Activated CD4-positive, alpha-beta memory T cell treated with anti-CD3 and anti-CD28 coated beads for 36 hours (primary cell): ENCODE measurements at regions of chr1 and their contacts with region 1.

Region 1: GRCh38 chr1:18883636-18884418 is 18.5 kb downstream of the ALDH4A1 start:
- DNase-seq: peak; percentile 78
- H3K4me3 Mint-ChIP-seq: no peak overlapping the region
- H3K27ac Mint-ChIP-seq: no peak overlapping the region
- H3K4me1 Mint-ChIP-seq: no peaks in the 10 kb centered on the region
- H3K27me3 Mint-ChIP-seq: no peaks in the 10 kb centered on the region

Region 2: GRCh38 chr1:18972531-18972930 is 88.7 kb after region 1 on chr1:
- CTCF ChIA-PET with region 1: interaction called, 14 read pairs
- POLR2A ChIA-PET with region 1: no interaction called
- intact Hi-C with region 1: no loop called
- DNase-seq: no peak
- H3K4me3 Mint-ChIP-seq: no peak overlapping the region
- H3K27ac Mint-ChIP-seq: no peak overlapping the region
- H3K4me1 Mint-ChIP-seq: peaks cover 9% of the 10 kb centered on the region
- H3K27me3 Mint-ChIP-seq: peaks cover 12% of the 10 kb centered on the region

Region 3: DNA sequence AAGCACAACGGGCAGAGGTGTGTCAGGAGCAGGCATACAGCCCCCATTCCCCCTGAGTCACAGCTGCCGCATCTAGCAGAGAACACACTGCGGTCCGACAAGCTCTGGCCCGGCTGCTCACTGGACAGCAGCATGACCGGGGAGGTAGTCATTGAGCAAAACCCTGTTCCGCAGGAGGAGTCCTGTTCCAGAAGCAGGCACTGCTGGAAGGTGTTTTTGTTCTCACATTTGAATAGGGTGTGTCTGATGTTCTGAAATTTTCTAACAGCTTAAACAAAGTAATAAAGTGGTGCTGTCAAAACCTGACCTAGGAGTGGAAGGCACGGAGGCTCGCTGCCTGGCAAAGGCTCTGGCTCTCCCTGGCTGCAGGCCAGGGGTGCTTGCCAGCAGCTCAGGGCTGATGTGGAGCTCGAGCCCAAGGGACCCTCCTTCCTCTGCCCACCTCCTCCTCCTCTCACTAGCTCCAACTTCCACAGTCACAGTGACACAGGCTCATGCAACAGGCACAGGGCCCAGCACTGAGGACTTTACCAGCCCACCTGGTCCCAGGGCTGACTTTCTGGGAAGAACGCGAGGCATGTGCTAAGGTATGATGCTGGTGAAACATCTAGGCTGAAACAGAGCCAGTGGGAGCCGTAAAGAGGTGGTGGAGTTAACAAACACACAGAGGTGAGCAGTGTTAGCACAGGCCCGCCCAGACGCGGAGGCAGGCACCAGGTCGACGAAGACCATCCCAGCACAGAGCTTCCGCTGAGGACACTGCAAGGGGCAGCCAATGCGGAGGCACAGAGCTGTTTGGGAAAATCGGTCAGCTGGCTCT is 191.3 kb after region 1 on chr1:
- CTCF ChIA-PET with region 1: interaction called, 36 read pairs
- POLR2A ChIA-PET with region 1: no interaction called
- intact Hi-C with region 1: loop called (anchors 1 kb)
- DNase-seq: no peak
- H3K4me3 Mint-ChIP-seq: no peak overlapping the region
- H3K27ac Mint-ChIP-seq: peak overlapping the region; percentile 81
- H3K4me1 Mint-ChIP-seq: peaks cover 55% of the 10 kb centered on the region
- H3K27me3 Mint-ChIP-seq: no peaks in the 10 kb centered on the region

Region 4: GRCh38 chr1:19087737-19088594 is 204.1 kb after region 1 on chr1:
- CTCF ChIA-PET with region 1: interaction called, 10 read pairs
- POLR2A ChIA-PET with region 1: no interaction called
- intact Hi-C with region 1: no loop called
- DNase-seq: peak; percentile 37
- H3K4me3 Mint-ChIP-seq: no peak overlapping the region
- H3K27ac Mint-ChIP-seq: peak overlapping the region; percentile 69
- H3K4me1 Mint-ChIP-seq: peaks cover 29% of the 10 kb centered on the region
- H3K27me3 Mint-ChIP-seq: no peaks in the 10 kb centered on the region

Region 5: DNA sequence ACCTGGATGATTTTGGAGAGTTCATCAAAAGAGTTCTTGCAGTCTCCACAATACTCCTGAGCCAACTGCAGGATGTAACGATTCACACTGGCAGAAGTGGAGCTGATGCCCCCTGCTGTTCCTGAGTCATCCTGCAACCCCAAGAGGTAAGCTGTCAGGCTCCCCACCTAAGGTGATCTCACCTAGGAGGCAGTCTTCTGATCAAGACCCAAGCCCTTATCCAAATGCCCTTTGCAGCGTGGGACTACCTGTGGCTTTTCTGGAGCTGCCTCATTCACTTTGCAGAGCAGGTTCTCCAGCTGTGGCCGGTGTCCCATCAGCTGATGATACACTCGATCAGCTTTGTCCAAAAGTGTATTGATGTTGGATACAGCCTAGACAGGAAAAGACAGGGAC is 229.9 kb after region 1 on chr1:
- CTCF ChIA-PET with region 1: interaction called, 34 read pairs
- POLR2A ChIA-PET with region 1: no interaction called
- intact Hi-C with region 1: no loop called
- DNase-seq: peak; percentile 48
- H3K4me3 Mint-ChIP-seq: no peak overlapping the region
- H3K27ac Mint-ChIP-seq: no peak overlapping the region
- H3K4me1 Mint-ChIP-seq: no peaks in the 10 kb centered on the region
- H3K27me3 Mint-ChIP-seq: no peaks in the 10 kb centered on the region

Region 6: GRCh38 chr1:19424651-19425570 is 541.1 kb after region 1 on chr1:
- CTCF ChIA-PET with region 1: no interaction called
- POLR2A ChIA-PET with region 1: no interaction called
- intact Hi-C with region 1: no loop called
- DNase-seq: no peak
- H3K4me3 Mint-ChIP-seq: no peak overlapping the region
- H3K27ac Mint-ChIP-seq: peak overlapping the region; percentile 51
- H3K4me1 Mint-ChIP-seq: peaks cover 82% of the 10 kb centered on the region
- H3K27me3 Mint-ChIP-seq: no peaks in the 10 kb centered on the region